Colonic mucosa (tissue), 4 donors: ENCODE measurements at regions of chr7 and their contacts with region 1.

Region 1: DNA sequence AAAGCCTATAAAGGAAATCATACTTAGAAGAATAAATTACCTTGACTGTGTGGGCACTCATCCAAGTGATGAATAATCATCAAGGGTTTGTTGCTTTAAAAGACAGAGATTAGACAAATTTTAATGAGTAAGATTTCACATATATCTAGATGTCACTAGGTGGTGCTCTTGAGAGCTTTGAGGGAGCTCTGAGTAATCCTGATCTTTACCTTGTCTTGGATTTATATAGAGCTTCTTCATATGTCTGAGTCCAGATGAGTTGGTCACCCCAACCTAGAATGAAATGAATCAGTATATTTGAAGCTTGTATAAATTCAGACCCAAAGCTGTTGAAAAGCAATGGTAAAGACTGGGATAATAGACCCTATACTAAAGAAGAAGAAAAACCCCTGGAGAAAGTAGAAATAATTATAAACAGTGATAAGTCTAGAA is 3.7 kb downstream of the AGR2 start:
- DNase-seq: no peak
- H3K4me3 ChIP-seq: no peak overlapping the region
- H3K27ac ChIP-seq: peak overlapping the region; percentile 83
- H3K4me1 ChIP-seq: no peaks in the 10 kb centered on the region
- H3K27me3 ChIP-seq: no peaks in the 10 kb centered on the region
- CTCF ChIP-seq: peak; percentile 24

Region 2: GRCh38 chr7:16881844-16882243 is 80.7 kb after region 1 on chr7 and contains the start of gene AGR3:
- intact Hi-C with region 1: loop called (anchors 5 kb)
- DNase-seq: peak; percentile 38
- H3K4me3 ChIP-seq: peak within 1 kb of the TSS; percentile 32
- H3K27ac ChIP-seq: peak within 1 kb of the TSS; percentile 75
- H3K4me1 ChIP-seq: no peaks in the 10 kb centered on the region
- H3K27me3 ChIP-seq: no peaks in the 10 kb centered on the region
- CTCF ChIP-seq: no peak
- total RNA-seq, gene AGR3: 144 to 197 TPM